GM23248 (cell line): ENCODE measurements at regions of chr19 and their contacts with region 1.

Region 1: DNA sequence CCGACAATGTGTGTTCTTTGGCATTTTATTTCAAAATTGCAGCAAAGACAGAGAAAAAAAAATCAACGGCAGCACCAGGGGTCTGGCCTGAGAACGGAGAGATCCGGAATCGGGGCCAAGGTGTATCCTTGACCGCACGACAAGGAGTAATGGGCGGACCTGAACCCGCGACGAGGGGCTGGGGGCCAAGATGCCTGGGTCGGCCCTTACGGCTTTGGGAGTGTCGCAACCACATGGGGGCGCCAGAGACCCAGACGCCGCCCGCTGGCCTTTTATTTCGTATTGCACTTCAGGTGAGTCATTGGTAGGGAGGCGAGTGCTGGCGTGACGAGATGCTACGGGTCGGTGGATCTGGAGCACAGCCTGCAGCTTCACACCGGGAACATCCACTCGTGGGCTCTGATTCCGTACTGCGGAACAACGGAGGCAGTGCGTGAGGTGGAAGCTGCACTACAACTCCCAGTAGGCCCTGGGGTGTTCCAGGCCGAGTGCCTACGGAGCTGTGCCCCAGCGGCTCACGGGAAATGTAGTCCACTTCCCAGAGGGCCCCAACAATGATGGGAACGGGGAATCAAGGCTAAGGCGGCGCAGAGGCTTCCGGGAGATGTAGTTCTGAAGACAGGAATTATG is 15.7 kb downstream of the BCAT2 start:
- DNase-seq: peak; percentile 95
- H3K4me3 ChIP-seq: peak overlapping the region; percentile 63
- H3K27ac ChIP-seq: peak overlapping the region; percentile 58
- H3K4me1 ChIP-seq: no peaks in the 10 kb centered on the region
- H3K27me3 ChIP-seq: no peaks in the 10 kb centered on the region

Region 2: DNA sequence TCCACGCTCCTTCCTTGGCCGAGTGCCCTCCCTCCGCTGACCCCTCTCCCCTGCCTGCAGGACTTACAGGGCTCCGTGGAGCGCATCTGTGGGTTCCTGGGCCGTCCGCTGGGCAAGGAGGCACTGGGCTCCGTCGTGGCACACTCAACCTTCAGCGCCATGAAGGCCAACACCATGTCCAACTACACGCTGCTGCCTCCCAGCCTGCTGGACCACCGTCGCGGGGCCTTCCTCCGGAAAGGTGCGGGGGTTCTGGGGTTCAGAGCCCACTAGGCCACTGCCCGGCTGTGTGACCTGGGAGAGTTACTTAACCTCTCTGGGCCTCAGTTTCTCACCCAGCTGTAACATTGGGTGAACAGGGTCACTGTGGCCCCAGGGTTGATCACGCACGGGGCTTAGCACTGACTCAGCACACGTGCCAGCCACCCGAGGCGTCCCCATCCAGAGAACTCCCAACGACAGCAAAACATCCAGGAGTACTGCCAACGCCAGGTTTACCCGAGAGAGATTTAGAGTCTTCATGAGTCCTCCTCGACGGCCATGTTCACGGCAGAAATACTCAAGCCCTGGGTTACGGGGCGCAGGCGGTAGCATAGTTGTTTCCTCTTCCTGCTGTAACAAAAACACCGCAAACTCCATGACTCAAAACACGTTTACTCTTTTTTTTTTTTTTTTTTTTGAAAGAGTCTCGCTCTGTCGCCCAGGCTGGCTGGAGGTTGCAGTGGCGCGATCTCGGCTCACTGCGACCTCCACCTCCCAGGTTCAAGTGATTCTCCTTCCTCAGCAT is 198.3 kb before region 1 on chr19:
- in situ Hi-C with region 1: no loop called
- DNase-seq: no peak
- H3K4me3 ChIP-seq: no peak overlapping the region
- H3K27ac ChIP-seq: no peak overlapping the region
- H3K4me1 ChIP-seq: no peaks in the 10 kb centered on the region
- H3K27me3 ChIP-seq: no peaks in the 10 kb centered on the region; the same call in 1 of the 2 replicates

Region 3: GRCh38 chr19:48646001-48646721 is 149.0 kb before region 1 on chr19 and contains the start of gene CA11:
- in situ Hi-C with region 1: no loop called
- DNase-seq: peak; percentile 87
- H3K4me3 ChIP-seq: peak within 1 kb of the TSS; percentile 73
- H3K27ac ChIP-seq: no peak within 1 kb of the TSS
- H3K4me1 ChIP-seq: 0 out of 2 replicates have a peak, but pooled peaks cover 17% of the 10 kb centered on the region
- H3K27me3 ChIP-seq: no peaks in the 10 kb centered on the region
- total RNA-seq, gene CA11: 1.1 and 1.6 TPM in 2 replicates

Region 4: DNA sequence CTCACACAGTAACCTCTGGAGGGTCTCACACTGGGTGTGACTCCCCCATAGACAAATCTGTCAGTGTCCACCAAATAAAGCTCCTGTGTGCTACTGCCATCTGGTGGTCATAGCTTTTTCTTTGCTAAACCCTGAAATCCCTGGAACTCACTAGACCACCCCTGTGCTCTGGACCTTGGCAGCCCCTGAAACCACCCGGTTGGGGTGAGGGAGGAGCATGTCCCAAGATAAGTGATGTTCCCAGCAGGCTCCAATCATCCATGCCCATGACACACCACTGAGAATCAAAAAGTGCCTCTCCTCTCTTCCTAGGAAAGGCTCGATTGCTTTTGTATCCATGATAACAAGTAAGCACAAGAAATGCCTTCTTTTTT is 47.6 kb after region 1 on chr19:
- in situ Hi-C with region 1: loop called (anchors 5 kb)
- DNase-seq: peak; percentile 63
- H3K4me3 ChIP-seq: no peak overlapping the region
- H3K27ac ChIP-seq: no peak overlapping the region
- H3K4me1 ChIP-seq: no peaks in the 10 kb centered on the region
- H3K27me3 ChIP-seq: no peaks in the 10 kb centered on the region

Region 5: DNA sequence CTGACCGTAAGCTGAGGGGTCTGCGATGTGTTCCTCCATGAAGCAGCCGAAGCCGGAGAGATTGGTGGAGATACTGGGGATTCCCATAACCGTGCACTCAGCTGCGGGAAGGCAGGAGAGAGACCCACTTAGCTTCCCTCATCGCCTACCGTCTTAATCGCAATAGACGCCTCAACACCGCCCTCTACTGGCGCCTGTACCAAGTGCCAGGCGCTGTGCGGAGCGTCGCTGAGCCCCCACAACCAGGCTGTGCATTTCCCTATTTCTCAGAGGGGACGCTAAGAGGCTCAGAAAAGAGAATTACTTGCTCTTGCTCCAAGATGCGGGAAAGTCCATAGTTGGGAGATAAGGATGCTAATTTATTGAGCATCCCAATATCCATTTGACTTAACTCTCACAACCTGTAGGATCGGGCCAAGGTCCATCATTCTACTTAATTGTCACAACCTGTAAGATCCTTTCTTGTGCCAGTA is 175.8 kb after region 1 on chr19:
- in situ Hi-C with region 1: loop called (anchors 10 kb)
- DNase-seq: peak; percentile 83
- H3K4me3 ChIP-seq: no peak overlapping the region
- H3K27ac ChIP-seq: no peak overlapping the region
- H3K4me1 ChIP-seq: peaks cover 8% of the 10 kb centered on the region; the same call in 1 of the 2 replicates
- H3K27me3 ChIP-seq: no peaks in the 10 kb centered on the region

Region 6: DNA sequence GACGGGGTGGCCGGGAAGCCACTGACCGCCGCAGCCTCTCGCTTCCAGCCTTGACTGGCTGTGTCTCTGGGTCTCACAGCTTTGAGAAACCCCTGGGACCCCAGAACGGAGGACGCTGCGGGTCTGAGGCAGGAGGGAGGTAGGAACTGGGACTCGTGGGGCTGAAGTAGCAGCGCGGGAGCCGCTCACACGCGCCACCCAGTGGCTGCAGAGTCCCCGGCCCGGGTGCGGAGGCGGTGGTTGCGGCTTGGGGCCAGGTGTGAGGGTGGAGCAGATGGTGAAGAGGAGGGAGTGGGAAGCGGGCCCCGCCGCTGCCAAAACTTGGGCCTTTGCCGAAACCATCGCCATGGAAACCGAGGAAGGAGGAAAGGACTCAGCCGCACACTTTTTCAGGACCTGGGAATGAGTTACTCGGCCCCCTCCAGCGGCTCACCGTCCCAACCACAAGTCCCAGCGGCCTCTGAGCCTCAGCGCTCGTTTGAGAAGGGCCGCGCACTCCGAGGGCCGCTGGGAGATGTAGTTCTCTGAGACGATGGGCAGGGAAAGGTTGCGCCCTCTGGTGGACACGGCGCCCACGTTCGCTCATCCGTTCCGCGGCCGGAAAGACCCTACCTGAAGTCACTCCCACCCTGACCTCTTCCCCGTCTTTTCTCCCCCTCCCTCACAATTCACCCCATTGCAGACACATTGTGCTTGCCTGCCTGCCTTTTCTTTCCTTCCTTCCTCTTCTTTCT is 648.4 kb after region 1 on chr19:
- in situ Hi-C with region 1: no loop called
- DNase-seq: peak; percentile 98
- H3K4me3 ChIP-seq: peak overlapping the region; percentile 82
- H3K27ac ChIP-seq: peak overlapping the region; percentile 34; the same call in 1 of the 2 replicates
- H3K4me1 ChIP-seq: no peaks in the 10 kb centered on the region
- H3K27me3 ChIP-seq: peaks cover 26% of the 10 kb centered on the region